ENCODE measurements at regions of chr15 and their contacts with region 1.

Region 1: DNA sequence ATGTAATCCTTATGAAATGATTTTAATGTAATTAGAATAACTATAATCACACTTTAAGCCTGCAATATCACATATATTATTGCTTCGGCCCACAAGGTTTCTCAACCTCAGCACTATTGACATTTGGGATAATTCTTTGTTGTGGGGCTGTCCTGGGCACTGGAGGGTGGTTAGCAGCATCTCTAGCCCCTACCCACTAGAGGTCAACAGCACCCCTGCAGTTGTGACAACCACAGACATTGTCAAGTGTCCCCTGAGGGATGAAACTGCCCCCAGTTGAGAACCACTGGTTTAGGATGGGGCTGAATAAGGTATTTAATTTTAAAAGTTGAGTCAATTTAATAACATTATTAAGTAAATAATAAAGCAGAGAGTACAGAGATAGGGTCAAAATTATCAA is 6.4 kb upstream of the ABHD2 start:
- DNase-seq: no peak
- ATAC-seq: no peak
- H3K4me3 ChIP-seq: no peak overlapping the region
- H3K27ac ChIP-seq: no peak overlapping the region
- H3K4me1 ChIP-seq: peaks cover 5% of the 10 kb centered on the region
- H3K27me3 ChIP-seq: no peaks in the 10 kb centered on the region
- CTCF ChIP-seq: no peak
- POLR2A ChIP-seq: no peak
- RAD21 ChIP-seq: no peak

Region 2: GRCh38 chr15:89119489-89120123 is 37.7 kb after region 1 on chr15:
- CTCF ChIA-PET with region 1: no interaction called
- POLR2A ChIA-PET with region 1: no interaction called
- dilution Hi-C with region 1: no loop called
- in situ Hi-C with region 1: no loop called
- intact Hi-C with region 1: loop called (anchors 5 kb)
- DNase-seq: peak; percentile 36
- ATAC-seq: no peak
- H3K4me3 ChIP-seq: no peak overlapping the region
- H3K27ac ChIP-seq: no peak overlapping the region
- H3K4me1 ChIP-seq: peaks cover 13% of the 10 kb centered on the region
- H3K27me3 ChIP-seq: no peaks in the 10 kb centered on the region
- CTCF ChIP-seq: no peak
- POLR2A ChIP-seq: no peak
- RAD21 ChIP-seq: no peak

Measured in IMR-90 (cell line).